Activated CD8-positive, alpha-beta memory T cell treated with anti-CD3 and anti-CD28 coated beads, Interleukin-2, amount 10 ng/mL, durations not matched to agents 7 days and 5 days (primary cell): ENCODE measurements at regions of chr22 and their contacts with region 1.

Region 1: GRCh38 chr22:29481612-29482011 is 1.6 kb downstream of the NEFH start:
- DNase-seq: no peak
- ATAC-seq: no peak
- H3K4me3 Mint-ChIP-seq: peak overlapping the region; percentile 68
- H3K27ac Mint-ChIP-seq: peak overlapping the region; percentile 57
- H3K4me1 Mint-ChIP-seq: peaks cover 13% of the 10 kb centered on the region
- H3K27me3 Mint-ChIP-seq: peaks cover 40% of the 10 kb centered on the region

Region 2: DNA sequence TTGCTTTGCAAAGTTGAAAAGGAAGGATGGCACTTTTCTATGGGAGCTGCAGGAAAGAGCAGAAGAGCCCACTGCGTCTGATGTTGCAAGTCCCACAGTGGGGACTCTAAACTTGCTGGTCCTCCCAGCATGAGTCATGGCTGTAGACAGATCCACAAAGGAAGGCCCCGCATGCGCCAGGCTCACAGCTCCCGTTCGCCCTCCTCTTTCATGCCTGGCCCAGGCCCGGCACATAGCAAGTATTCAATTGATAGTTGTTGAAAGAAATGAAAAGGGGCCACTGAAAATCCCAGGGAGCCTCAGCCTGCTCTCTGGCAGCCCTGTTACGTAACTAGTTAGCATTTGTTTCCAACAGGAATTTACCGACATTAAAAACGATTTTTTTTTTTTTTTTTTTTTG is 112.2 kb before region 1 on chr22:
- CTCF ChIA-PET with region 1: no interaction called
- DNase-seq: no peak
- ATAC-seq: no peak
- H3K4me3 Mint-ChIP-seq: no peak overlapping the region
- H3K27ac Mint-ChIP-seq: no peak overlapping the region
- H3K4me1 Mint-ChIP-seq: peaks cover 4% of the 10 kb centered on the region
- H3K27me3 Mint-ChIP-seq: no peaks in the 10 kb centered on the region

Region 3: DNA sequence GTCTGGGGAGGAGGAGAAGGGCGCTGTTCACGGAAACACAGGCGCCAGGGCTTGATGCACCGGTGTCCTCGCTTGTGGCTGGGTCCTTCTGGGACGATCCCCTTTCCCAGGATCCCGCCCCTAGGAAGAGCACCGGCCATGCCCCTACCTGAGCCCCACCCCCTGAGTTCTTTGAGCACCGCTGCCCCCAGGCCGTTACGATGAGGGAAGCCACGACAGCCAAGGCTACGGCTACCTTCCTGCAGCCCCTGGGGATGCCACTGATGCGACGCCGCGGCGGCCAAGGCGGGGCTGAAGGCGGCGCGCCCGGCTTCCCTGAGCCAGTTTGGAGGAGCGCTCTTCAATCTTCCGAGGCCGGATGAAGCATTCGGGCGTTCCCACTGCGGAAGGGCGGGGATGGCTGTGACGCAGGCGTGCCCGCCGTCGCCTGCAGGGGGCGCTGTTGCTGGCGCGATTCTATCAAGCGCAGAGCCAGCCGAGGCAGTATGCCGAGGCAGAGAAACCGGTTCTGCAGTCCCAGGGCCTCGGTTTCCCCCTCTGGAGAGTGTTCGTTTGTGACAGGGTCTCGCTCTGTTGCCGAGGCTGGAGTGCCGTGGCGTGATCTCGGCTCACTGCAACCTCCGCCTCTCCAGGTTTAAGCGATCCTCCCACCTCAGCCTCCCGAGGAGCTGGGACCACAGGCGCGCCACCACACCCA is 11.3 kb before region 1 on chr22:
- CTCF ChIA-PET with region 1: interaction called, 11 read pairs
- DNase-seq: peak; percentile 80
- ATAC-seq: peak; percentile 96
- H3K4me3 Mint-ChIP-seq: peak overlapping the region; percentile 58
- H3K27ac Mint-ChIP-seq: no peak overlapping the region
- H3K4me1 Mint-ChIP-seq: peaks cover 7% of the 10 kb centered on the region
- H3K27me3 Mint-ChIP-seq: peaks cover 10% of the 10 kb centered on the region

Region 4: GRCh38 chr22:29587938-29588699 is 106.5 kb after region 1 on chr22:
- CTCF ChIA-PET with region 1: no interaction called
- DNase-seq: no peak
- ATAC-seq: no peak
- H3K4me3 Mint-ChIP-seq: no peak overlapping the region
- H3K27ac Mint-ChIP-seq: no peak overlapping the region
- H3K4me1 Mint-ChIP-seq: peaks cover 9% of the 10 kb centered on the region
- H3K27me3 Mint-ChIP-seq: no peaks in the 10 kb centered on the region

Region 5: DNA sequence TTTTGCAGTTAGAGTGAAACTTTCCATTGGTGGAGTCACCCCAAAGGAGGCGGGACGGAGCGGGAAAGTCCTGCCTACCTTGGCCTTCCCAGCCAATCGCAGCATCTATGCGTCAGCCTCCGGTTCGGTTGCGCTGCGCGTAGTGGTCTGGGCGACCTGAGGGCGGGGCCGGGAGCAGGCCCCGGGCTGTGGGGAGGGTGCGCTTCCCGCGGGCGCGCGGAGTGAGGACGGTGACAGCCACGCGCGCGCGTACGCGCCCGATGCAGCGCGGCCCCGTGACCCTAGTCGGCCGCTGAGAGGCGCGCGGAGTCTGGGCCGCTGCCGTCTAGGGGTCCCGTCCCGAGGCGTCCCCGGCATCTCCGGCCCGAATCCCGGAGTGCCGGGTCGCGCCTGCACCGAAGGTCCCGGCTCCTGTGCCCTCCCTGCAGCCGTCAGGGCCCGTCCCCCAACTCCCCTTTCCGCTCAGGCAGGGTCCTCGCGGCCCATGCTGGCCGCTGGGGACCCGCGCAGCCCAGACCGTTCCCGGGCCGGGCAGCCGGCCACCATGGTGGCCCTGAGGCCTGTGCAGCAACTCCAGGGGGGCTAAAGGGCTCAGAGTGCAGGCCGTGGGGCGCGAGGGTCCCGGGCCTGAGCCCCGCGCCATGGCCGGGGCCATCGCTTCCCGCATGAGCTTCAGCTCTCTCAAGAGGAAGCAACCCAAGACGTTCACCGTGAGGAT is 121.9 kb after region 1 on chr22 and contains the start of gene NF2:
- CTCF ChIA-PET with region 1: no interaction called
- DNase-seq: peak; percentile 99
- ATAC-seq: peak; percentile 98
- H3K4me3 Mint-ChIP-seq: peak within 1 kb of the TSS; percentile 85
- H3K27ac Mint-ChIP-seq: peak within 1 kb of the TSS; percentile 97
- H3K4me1 Mint-ChIP-seq: peaks cover 28% of the 10 kb centered on the region
- H3K27me3 Mint-ChIP-seq: no peaks in the 10 kb centered on the region
- total RNA-seq, gene NF2: 46.6 to 61.2 TPM